ENCODE measurements at regions of chr12 and their contacts with region 1.

Region 1: DNA sequence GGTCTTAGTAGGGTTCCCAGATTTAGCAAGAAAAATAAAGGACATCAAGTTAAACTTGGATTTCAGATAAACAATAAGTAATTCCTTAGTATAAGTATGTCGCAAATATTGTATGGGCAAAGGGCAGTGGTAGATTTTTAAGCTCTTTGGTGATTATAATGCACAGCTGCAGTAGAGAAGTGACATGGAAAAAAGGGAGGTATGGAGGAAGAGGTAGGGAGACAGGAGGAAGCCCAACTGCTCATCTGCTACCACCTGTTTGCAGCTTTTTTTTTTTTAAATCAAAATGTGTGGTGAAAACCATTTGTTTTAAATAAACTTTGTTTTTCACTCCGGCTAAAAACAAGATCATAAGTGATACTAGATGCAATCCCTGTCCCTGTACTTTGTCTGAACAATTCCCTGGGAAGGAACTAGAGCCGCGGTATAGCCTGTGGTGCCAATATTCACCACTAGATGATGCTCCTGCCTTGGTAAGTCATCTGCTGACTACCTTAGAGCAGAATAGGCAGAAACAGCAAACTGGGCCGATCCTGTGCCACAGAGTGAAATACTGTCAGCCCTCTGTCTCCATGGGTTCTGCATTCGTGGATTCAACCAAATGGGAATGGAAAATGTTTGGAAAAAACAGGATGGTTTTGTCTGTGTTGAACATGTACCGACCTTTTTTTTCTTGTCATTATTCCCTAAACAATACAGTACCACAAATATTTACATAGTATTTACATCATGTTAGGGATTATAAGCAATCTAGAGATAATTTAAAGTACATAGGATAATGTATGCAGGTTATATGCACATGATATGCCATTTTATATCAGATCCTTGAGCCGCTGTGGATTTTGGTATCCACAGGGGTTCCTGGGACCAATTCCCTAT is 62.4 kb upstream of the PLBD1 start:
- DNase-seq: peak; percentile 50
- CTCF ChIP-seq: peak; percentile 92

Region 2: DNA sequence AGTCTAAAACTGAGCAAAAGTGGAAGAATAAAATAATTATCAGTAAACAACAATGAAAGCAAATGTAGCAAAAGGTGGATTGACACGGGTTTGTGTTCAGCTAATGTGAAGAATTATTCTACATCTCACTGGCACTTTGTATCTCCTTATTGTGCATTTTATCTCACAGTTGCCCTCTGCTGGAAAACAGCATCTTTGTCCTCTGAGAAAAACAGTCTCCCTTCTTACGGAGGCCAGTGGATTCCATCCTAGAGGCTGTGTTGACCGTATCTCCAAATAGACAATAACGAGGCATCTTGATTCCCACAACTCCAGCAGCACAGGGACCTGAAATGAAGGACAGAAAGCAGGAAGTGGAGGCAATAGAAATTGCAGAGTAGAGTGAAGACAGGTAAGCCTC is 11.1 kb before region 1 on chr12:
- CTCF ChIA-PET with region 1: interaction called, 14 read pairs
- POLR2A ChIA-PET with region 1: no interaction called
- DNase-seq: no peak
- CTCF ChIP-seq: no peak

Region 3: GRCh38 chr12:14664510-14664909 is 34.4 kb after region 1 on chr12:
- CTCF ChIA-PET with region 1: interaction called, 14 read pairs
- POLR2A ChIA-PET with region 1: no interaction called
- DNase-seq: peak; percentile 50
- CTCF ChIP-seq: peak; percentile 70

Measured in GM10248 (cell line).